T-cell (primary cell): ENCODE measurements at regions of chr20 and their contacts with region 1.

Region 1: DNA sequence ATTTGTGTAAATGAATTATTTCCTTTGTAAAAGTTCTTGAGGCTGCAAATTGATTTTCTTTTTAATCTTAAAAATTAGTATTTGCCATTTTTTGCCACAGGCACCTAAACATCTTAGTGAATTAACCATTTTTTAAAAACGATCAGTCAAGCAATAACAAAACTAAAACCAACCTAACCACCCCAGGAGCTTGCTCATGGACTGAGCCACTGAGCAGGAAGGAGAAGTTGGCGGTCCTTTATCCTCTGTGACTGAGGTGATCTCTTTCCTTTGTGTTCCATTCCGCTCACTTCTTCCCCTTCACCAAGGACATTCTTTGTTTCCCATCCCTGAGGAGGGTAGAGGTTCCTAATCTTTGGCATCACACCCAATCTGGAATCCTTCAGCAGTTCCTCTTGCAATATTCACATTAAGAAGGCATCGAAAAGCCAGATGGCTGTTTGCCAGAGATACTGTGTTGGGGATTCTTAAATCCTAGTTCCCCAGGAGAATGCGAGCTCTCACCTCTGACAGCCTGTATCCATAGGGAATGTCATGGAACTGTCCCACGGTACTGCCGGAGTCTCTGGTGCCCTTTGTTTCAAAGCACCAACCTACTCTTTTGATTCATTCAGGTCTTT is 30.5 kb downstream of the RPRD1B start:
- DNase-seq: no peak
- ATAC-seq: no peak
- H3K4me3 ChIP-seq: no peak overlapping the region
- H3K4me3 Mint-ChIP-seq: no peak overlapping the region
- H3K27ac ChIP-seq: no peak overlapping the region
- H3K27ac Mint-ChIP-seq: no peak overlapping the region
- H3K4me1 ChIP-seq: no peaks in the 10 kb centered on the region
- H3K4me1 Mint-ChIP-seq: no peaks in the 10 kb centered on the region
- H3K27me3 ChIP-seq: no peaks in the 10 kb centered on the region
- H3K27me3 Mint-ChIP-seq: no peaks in the 10 kb centered on the region

Region 2: GRCh38 chr20:38498909-38499308 is 434.9 kb after region 1 on chr20:
- CTCF ChIA-PET with region 1: no interaction called
- POLR2A ChIA-PET with region 1: interaction called in 1 of 2 experiments, 10 read pairs
- DNase-seq: no peak
- ATAC-seq: no peak
- H3K4me3 ChIP-seq: no peak overlapping the region
- H3K4me3 Mint-ChIP-seq: no peak overlapping the region
- H3K27ac ChIP-seq: no peak overlapping the region
- H3K27ac Mint-ChIP-seq: no peak overlapping the region
- H3K4me1 ChIP-seq: no peaks in the 10 kb centered on the region
- H3K4me1 Mint-ChIP-seq: peaks cover 0 to 9% (median 7%) of the 10 kb centered on the region in 3 donors
- H3K27me3 ChIP-seq: no peaks in the 10 kb centered on the region
- H3K27me3 Mint-ChIP-seq: no peaks in the 10 kb centered on the region